Naive thymus-derived CD4-positive, alpha-beta T cell (primary cell): ENCODE measurements at regions of chr17 and their contacts with region 1.

Region 1: GRCh38 chr17:77372444-77373298 is 231.9 kb downstream of the SEC14L1 start:
- DNase-seq: peak; percentile 44 to 82 (median 63)
- ATAC-seq: peak; percentile 60
- H3K4me3 ChIP-seq: peak overlapping the region; percentile 98
- H3K4me3 Mint-ChIP-seq: peak overlapping the region; percentile 80 to 100 (median 85)
- H3K27ac ChIP-seq: peak overlapping the region; percentile 80
- H3K27ac Mint-ChIP-seq: peak overlapping the region in 8 of 9 donors; percentile 84 to 93 (median 90)
- H3K4me1 ChIP-seq: peaks cover 44 to 54% of the 10 kb centered on the region in 2 donors
- H3K4me1 Mint-ChIP-seq: peaks cover 49 to 74% (median 65%) of the 10 kb centered on the region in 7 donors
- H3K27me3 ChIP-seq: no peaks in the 10 kb centered on the region
- H3K27me3 Mint-ChIP-seq: no peaks in the 10 kb centered on the region

Region 2: GRCh38 chr17:76791053-76791980 is 581.4 kb before region 1 on chr17:
- CTCF ChIA-PET with region 1: no interaction called
- POLR2A ChIA-PET with region 1: no interaction called
- intact Hi-C with region 1: no loop called
- DNase-seq: peak in 3 of 9 donors; percentile 11 to 54 (median 15)
- ATAC-seq: peak; percentile 59
- H3K4me3 ChIP-seq: no peak overlapping the region
- H3K4me3 Mint-ChIP-seq: peak overlapping the region in 6 of 10 donors; percentile 30 to 67 (median 58)
- H3K27ac ChIP-seq: no peak overlapping the region
- H3K27ac Mint-ChIP-seq: peak overlapping the region in 8 of 9 donors; percentile 28 to 73 (median 60)
- H3K4me1 ChIP-seq: peaks cover 0 to 9% of the 10 kb centered on the region in 2 donors
- H3K4me1 Mint-ChIP-seq: peaks cover 11 to 24% (median 12%) of the 10 kb centered on the region in 7 donors
- H3K27me3 ChIP-seq: no peaks in the 10 kb centered on the region
- H3K27me3 Mint-ChIP-seq: peaks cover 0 to 5% (median 0%) of the 10 kb centered on the region in 5 donors

Region 3: GRCh38 chr17:77164483-77165091 is 208.1 kb before region 1 on chr17:
- CTCF ChIA-PET with region 1: no interaction called
- POLR2A ChIA-PET with region 1: no interaction called
- intact Hi-C with region 1: no loop called
- DNase-seq: no peak
- ATAC-seq: no peak
- H3K4me3 ChIP-seq: no peak overlapping the region
- H3K4me3 Mint-ChIP-seq: peak overlapping the region in 8 of 10 donors; percentile 1 to 65 (median 7)
- H3K27ac ChIP-seq: peak overlapping the region; percentile 26
- H3K27ac Mint-ChIP-seq: peak overlapping the region; percentile 2 to 84 (median 55)
- H3K4me1 ChIP-seq: peaks cover 0 to 19% of the 10 kb centered on the region in 2 donors
- H3K4me1 Mint-ChIP-seq: peaks cover 30 to 65% (median 52%) of the 10 kb centered on the region in 7 donors
- H3K27me3 ChIP-seq: no peaks in the 10 kb centered on the region
- H3K27me3 Mint-ChIP-seq: no peaks in the 10 kb centered on the region

Region 4: DNA sequence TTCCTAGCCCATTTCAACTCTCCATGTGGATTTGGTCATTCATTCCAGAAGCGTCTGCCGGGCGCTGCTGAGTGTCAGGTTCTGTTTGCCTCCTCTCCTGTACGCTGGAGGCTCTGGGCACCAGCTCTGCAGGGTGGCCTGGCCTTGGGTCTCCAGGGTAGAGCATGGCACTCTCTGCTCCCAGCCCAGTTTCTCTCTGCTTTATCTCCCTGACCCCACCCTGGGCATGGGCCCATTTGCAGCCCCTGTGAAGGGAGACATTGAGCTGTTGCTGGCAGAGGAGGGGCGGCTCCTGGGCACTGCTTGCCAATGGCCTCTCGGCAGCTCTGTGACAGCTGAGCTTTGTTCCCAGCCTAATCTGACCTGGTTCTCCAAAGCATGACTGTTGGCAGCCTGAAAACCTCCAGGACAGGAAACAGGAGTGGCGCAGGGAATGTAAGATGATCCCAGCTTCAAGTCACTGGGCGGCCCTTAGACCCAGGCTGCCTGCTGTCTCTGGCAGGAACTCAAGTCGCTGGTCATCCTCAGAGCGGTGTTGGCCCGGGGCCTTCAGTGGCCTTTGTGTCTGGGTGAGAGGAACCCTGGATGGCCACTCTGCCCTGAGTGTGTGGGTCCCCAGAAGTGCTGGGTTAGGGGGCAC is 85.1 kb before region 1 on chr17:
- CTCF ChIA-PET with region 1: no interaction called
- POLR2A ChIA-PET with region 1: no interaction called
- intact Hi-C with region 1: no loop called
- DNase-seq: no peak
- ATAC-seq: no peak
- H3K4me3 ChIP-seq: no peak overlapping the region
- H3K4me3 Mint-ChIP-seq: no peak overlapping the region
- H3K27ac ChIP-seq: no peak overlapping the region
- H3K27ac Mint-ChIP-seq: no peak overlapping the region
- H3K4me1 ChIP-seq: no peaks in the 10 kb centered on the region
- H3K4me1 Mint-ChIP-seq: peaks cover 0 to 10% (median 3%) of the 10 kb centered on the region in 7 donors
- H3K27me3 ChIP-seq: no peaks in the 10 kb centered on the region
- H3K27me3 Mint-ChIP-seq: peaks cover 0 to 13% (median 0%) of the 10 kb centered on the region in 5 donors

Region 5: DNA sequence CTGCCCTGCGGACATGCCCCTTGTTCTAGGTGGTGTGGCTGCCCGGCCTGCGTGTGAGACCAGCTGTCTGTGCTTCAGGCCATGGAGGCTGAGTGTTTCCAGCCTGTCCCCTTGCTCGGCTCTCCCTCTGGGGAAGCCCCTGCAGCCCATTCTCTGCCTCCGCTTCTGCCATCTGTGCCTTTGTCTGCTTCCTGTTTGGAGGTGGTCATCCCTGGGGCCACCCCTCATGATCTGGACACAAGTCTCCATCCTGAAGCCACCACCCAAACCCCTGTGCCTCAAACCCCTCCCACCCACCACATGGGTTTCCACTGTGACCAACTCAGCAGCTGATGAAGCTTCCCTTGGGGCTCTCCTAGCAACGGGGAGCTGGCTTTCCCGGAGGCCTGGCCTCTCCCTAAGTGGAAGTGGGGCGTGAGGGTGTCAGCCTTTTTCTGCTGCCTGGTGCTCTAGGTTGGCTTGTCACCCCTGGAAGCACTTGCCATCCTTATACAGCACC is 47.0 kb before region 1 on chr17:
- CTCF ChIA-PET with region 1: interaction called, 6 read pairs
- POLR2A ChIA-PET with region 1: interaction called, 84 read pairs
- intact Hi-C with region 1: loop called in 1 of 2 experiments (anchors 2 kb)
- DNase-seq: no peak
- ATAC-seq: peak; percentile 23
- H3K4me3 ChIP-seq: peak overlapping the region; percentile 28
- H3K4me3 Mint-ChIP-seq: peak overlapping the region; percentile 38 to 81 (median 66)
- H3K27ac ChIP-seq: peak overlapping the region; percentile 51
- H3K27ac Mint-ChIP-seq: peak overlapping the region; percentile 74 to 93 (median 89)
- H3K4me1 ChIP-seq: peaks cover 35 to 50% of the 10 kb centered on the region in 2 donors
- H3K4me1 Mint-ChIP-seq: peaks cover 46 to 68% (median 51%) of the 10 kb centered on the region in 7 donors
- H3K27me3 ChIP-seq: no peaks in the 10 kb centered on the region
- H3K27me3 Mint-ChIP-seq: peaks cover 0 to 2% (median 0%) of the 10 kb centered on the region in 5 donors

Region 6: DNA sequence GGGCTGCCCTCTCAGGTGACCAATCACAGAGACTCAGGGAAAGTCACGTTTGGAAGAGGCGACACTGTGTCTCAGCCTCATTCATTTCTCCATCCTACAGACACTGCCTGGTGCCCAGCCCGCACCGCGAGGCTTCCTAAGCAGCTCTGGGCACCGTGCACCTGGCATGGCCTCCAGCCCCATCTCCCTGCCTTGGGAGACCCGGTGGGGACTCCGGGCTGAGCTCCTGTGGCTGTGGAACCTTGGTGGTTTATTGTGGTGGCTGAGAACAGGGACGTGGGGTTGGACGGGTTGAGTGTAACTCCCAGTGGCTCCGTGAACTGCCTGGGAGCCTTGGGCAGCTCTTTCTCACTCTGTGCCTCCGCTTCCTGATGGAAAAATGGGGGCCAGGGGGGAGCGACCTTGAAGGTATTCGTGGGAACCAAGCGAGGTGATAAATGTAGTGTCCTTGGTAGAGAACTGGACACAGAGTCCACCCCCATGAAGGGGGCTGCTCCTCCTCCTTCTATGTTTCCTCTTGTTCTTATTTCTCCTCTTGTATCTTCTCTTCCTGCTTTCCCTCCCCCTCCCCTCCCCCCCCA is 16.5 kb before region 1 on chr17:
- CTCF ChIA-PET with region 1: interaction called, 4 read pairs
- POLR2A ChIA-PET with region 1: interaction called, 10 read pairs
- intact Hi-C with region 1: no loop called
- DNase-seq: peak in 1 of 9 donors; percentile 24
- ATAC-seq: peak; percentile 27
- H3K4me3 ChIP-seq: no peak overlapping the region
- H3K4me3 Mint-ChIP-seq: peak overlapping the region in 4 of 10 donors; percentile 9 to 28 (median 14)
- H3K27ac ChIP-seq: no peak overlapping the region
- H3K27ac Mint-ChIP-seq: peak overlapping the region in 5 of 9 donors; percentile 53 to 89 (median 79)
- H3K4me1 ChIP-seq: peaks cover 0 to 10% of the 10 kb centered on the region in 2 donors
- H3K4me1 Mint-ChIP-seq: peaks cover 9 to 58% (median 33%) of the 10 kb centered on the region in 7 donors
- H3K27me3 ChIP-seq: no peaks in the 10 kb centered on the region
- H3K27me3 Mint-ChIP-seq: peaks cover 0 to 3% (median 0%) of the 10 kb centered on the region in 5 donors

Region 7: DNA sequence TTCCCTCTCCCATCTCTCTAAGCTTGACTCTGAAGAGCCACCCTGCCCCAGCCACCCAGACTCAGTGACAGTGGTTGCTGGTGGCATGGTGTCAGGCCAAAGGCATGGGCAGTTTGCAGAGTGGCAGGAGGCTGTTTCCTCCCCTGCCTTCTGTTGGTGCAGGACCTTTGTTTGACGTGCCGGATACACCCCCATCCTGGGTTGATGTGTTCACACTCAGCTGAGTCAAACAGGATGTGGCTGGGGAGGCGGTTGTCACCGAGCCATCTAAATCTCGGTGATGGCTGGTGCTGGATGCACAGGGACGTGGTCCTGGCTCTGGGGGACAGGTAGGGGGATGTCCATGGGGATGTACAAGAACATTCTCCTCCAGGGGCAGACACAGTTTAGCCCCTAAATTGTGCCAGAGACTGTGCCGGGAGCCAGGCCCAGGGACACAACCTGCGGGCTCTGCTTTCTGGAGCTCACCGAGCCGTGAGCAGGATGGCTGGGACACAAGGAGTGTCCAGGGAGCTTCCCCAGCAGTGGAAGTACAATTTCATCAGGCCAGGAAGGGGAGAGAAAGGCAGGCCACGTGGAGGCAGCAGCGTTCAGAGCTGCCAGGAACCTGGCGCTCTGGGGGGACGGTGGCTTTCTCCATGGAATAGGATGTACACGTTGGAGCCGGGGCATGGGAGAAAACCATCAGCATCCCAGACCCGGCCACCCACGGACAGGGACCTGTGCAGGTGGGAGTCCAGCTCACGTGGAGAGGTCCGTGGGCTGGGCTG is 32.3 kb after region 1 on chr17:
- CTCF ChIA-PET with region 1: interaction called, 12 read pairs
- POLR2A ChIA-PET with region 1: interaction called, 63 read pairs
- intact Hi-C with region 1: loop called (anchors 1 to 2 kb)
- DNase-seq: peak; percentile 48 to 86 (median 84)
- ATAC-seq: peak; percentile 88
- H3K4me3 ChIP-seq: peak overlapping the region; percentile 66
- H3K4me3 Mint-ChIP-seq: peak overlapping the region; percentile 83 to 100 (median 95)
- H3K27ac ChIP-seq: peak overlapping the region; percentile 81
- H3K27ac Mint-ChIP-seq: peak overlapping the region; percentile 95 to 100 (median 97)
- H3K4me1 ChIP-seq: peaks cover 89 to 91% of the 10 kb centered on the region in 2 donors
- H3K4me1 Mint-ChIP-seq: peaks cover 71 to 97% (median 87%) of the 10 kb centered on the region in 7 donors
- H3K27me3 ChIP-seq: no peaks in the 10 kb centered on the region
- H3K27me3 Mint-ChIP-seq: no peaks in the 10 kb centered on the region

Region 8: DNA sequence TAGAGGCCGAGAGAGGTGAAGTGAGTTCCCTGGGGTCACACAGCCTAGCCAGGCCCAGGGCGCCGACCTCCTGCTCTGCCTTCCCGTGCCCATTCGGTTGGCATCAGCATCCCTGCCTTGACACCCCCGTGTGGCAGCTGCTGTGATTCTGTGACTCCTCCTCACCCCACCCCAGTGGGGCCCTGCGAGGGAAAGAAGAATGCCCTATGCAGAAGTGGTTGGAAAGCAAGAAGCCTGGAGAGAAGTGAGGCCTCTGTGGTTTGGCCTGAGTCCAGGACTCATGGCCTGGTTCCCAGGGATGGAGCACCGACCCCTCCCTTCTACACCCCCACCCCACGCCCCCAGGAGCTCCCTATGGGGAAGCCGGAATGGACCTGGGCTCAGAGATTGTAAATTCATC is 64.3 kb after region 1 on chr17:
- CTCF ChIA-PET with region 1: interaction called, 7 read pairs
- POLR2A ChIA-PET with region 1: interaction called, 64 read pairs
- intact Hi-C with region 1: no loop called
- DNase-seq: peak in 1 of 9 donors; percentile 53
- ATAC-seq: peak; percentile 17
- H3K4me3 ChIP-seq: peak overlapping the region; percentile 67
- H3K4me3 Mint-ChIP-seq: peak overlapping the region; percentile 84 to 98 (median 95)
- H3K27ac ChIP-seq: peak overlapping the region; percentile 92
- H3K27ac Mint-ChIP-seq: peak overlapping the region; percentile 85 to 100 (median 99)
- H3K4me1 ChIP-seq: peaks cover 91 to 99% of the 10 kb centered on the region in 2 donors
- H3K4me1 Mint-ChIP-seq: peaks cover 65 to 94% (median 88%) of the 10 kb centered on the region in 7 donors
- H3K27me3 ChIP-seq: no peaks in the 10 kb centered on the region
- H3K27me3 Mint-ChIP-seq: no peaks in the 10 kb centered on the region

Region 9: DNA sequence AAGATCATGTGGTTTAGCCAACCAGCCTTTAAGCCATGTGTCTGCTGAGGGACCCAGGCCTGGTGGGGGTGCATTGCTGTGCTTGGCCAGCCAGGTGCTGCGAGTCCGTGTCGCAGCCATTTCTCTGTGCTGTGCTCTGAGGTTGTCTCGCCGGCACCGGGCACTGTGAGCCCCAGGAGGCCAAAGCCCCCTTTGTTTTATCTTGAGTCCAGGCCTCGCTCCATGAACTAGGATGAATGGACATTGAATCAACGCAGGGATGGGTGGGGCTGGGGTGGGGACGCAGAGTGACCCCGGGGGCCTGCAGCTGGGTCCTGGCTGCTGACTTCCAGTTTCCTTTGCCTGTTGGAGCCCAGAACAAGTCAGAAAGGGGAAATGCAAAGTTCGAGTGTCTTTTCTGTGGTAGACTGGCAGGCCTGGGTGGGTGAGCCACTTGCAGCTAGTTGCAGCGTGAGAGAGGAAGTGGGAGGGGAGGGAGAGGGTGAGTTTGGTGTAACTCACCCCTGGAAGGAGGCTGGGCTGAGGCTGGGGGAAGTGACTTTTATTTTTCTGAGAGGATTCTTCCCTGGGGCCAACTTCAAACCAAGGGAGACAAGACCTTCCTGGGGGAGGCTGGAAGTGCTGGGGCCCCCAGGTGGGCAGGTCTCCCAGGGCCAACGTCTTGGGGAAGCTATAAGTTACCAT is 92.8 kb after region 1 on chr17:
- CTCF ChIA-PET with region 1: no interaction called
- POLR2A ChIA-PET with region 1: interaction called, 15 read pairs
- intact Hi-C with region 1: no loop called
- DNase-seq: peak in 8 of 9 donors; percentile 67 to 89 (median 87)
- ATAC-seq: peak; percentile 97
- H3K4me3 ChIP-seq: peak overlapping the region; percentile 54
- H3K4me3 Mint-ChIP-seq: peak overlapping the region; percentile 79 to 87 (median 84)
- H3K27ac ChIP-seq: peak overlapping the region; percentile 64
- H3K27ac Mint-ChIP-seq: peak overlapping the region; percentile 88 to 100 (median 94)
- H3K4me1 ChIP-seq: peaks cover 88 to 90% of the 10 kb centered on the region in 2 donors
- H3K4me1 Mint-ChIP-seq: peaks cover 74 to 96% (median 86%) of the 10 kb centered on the region in 7 donors
- H3K27me3 ChIP-seq: no peaks in the 10 kb centered on the region
- H3K27me3 Mint-ChIP-seq: no peaks in the 10 kb centered on the region